Activated CD8-positive, alpha-beta memory T cell treated with anti-CD3 and anti-CD28 coated beads, Interleukin-2, amount 10 ng/mL, durations not matched to agents 7 days and 5 days (primary cell): ENCODE measurements at regions of chr2 and their contacts with region 1.

Region 1: DNA sequence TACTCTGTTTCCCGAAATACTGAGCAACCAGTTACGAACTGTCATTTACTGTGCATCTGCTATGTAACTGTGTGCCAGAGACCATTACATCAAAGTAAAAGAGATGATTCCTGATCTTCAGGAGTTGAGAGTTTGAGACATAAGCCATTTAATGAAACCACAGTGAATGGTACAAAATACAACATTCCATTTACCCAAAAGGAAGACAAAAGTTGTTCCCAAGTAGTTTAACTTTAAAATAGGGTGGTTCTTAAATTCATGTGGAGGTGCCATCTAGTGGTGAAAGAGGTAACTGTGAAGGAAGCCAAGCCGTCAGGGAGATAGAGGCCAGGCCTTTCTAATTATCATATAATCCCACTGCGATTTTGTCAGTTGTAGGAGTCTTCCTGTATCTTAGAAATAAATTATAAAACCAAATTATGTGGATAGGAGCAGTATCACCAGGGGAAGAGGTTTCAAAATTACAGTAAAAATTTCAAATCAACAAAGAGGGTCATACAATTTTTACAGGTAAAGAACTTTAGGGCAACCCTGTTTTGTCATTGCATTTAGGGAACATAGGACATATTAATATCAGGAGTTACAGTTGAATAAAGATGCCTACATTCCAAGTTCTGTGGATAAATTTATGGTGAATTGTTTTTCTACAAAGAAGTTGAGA is 67.7 kb downstream of the EPAS1 start:
- DNase-seq: no peak
- ATAC-seq: no peak
- H3K4me3 Mint-ChIP-seq: no peak overlapping the region
- H3K27ac Mint-ChIP-seq: no peak overlapping the region
- H3K4me1 Mint-ChIP-seq: peaks cover 61% of the 10 kb centered on the region
- H3K27me3 Mint-ChIP-seq: no peaks in the 10 kb centered on the region

Region 2: GRCh38 chr2:46010925-46011490 is 353.9 kb before region 1 on chr2:
- CTCF ChIA-PET with region 1: interaction called, 15 read pairs
- DNase-seq: peak; percentile 39
- ATAC-seq: peak; percentile 85
- H3K4me3 Mint-ChIP-seq: no peak overlapping the region
- H3K27ac Mint-ChIP-seq: peak overlapping the region; percentile 22
- H3K4me1 Mint-ChIP-seq: peaks cover 51% of the 10 kb centered on the region
- H3K27me3 Mint-ChIP-seq: no peaks in the 10 kb centered on the region

Region 3: DNA sequence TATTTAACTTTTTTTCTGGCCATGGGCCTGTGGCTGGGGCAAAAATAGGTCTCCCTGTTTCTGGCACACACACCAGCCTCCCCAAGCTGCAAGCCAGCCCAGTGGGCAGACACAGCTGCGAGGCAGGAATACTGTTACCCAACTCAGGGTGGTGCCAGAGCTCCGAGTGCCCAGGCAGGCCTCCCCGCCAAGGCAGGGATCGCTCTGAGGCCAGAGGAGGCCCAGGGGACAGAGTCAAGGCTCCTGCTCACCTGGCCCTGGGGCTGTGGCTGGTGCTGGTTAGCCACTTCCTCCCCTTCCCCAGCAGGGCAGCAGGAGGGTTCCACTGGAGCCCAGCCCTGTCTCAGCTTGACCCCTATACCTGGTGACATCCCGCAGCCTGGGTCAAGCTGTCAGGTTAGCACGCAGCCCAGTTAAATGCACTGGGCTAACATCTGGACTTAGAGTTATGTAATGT is 134.8 kb before region 1 on chr2:
- CTCF ChIA-PET with region 1: interaction called, 11 read pairs
- DNase-seq: peak; percentile 70
- ATAC-seq: peak; percentile 63
- H3K4me3 Mint-ChIP-seq: peak overlapping the region; percentile 49
- H3K27ac Mint-ChIP-seq: peak overlapping the region; percentile 93
- H3K4me1 Mint-ChIP-seq: peaks cover 43% of the 10 kb centered on the region
- H3K27me3 Mint-ChIP-seq: peaks cover 14% of the 10 kb centered on the region

Region 4: DNA sequence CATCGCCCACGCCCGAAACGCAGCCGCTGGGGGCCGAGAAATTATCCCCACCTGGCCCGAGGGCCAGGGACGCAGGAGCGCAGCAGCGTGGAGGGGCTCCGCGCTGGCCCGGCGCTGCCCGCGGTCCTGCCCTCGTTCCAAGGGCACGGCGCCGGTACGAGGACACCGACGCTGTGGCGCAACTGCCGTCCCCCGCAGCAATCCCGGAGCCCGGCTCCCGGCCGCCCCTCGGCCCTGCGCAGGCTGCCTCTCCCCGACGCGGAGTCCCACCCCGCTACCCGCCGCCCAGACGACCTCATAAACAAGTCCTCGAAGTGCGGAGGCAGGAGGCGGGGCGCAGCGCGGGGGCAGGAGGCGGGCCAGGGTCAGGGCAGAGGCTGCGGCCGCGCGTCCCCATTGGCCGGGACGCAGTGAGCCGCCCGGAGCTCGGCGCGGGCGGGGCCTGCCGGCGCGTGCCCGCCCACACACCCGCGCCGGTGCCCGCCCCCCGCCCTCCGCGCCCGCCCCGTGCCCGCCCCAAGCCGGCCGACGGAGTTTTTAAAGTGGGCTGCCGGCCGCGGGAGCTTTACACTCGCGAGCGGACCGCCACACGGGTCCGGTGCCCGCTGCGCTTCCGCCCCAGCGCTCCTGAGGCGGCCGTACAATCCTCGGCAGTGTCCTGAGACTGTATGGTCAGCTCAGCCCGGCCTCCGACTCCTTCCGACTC is 67.9 kb before region 1 on chr2 and contains the start of gene EPAS1:
- CTCF ChIA-PET with region 1: interaction called, 11 read pairs
- DNase-seq: peak; percentile 91
- ATAC-seq: peak; percentile 93
- H3K4me3 Mint-ChIP-seq: peak within 1 kb of the TSS; percentile 83
- H3K27ac Mint-ChIP-seq: peak within 1 kb of the TSS; percentile 85
- H3K4me1 Mint-ChIP-seq: peaks cover 40% of the 10 kb centered on the region
- H3K27me3 Mint-ChIP-seq: peaks cover 75% of the 10 kb centered on the region
- total RNA-seq, gene EPAS1: 15.6 to 42.5 TPM

Region 5: DNA sequence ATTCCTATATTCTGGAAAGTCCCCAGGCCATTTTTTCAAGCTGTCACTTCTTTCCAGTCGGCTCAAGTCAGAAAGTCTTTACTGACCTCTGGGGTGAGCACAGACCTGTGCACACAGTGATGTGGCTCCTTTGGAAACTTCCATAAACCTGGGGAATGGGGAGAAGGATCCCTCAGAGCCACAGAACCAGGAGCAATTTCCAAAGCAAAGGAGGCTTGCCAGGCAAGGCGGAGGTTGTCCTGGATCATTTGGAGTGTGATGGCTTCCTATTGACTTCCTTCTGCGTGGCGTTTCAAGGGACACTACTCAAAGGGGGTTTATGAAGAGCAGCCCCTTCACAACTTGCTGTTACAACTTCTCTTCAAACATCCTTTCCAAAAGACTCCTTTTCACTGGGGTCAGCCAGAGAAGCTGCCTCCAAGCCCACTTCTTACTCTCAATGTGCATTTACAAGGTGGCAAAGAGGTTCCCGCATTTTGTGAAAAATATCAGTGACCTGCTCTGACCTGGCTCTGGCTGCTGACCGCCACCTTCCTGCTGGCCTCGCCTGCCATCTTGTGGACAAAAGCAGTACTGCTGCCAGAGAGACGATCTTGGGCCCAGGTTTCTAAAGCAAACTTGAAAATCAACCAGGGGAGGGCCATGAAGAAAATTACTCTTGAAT is 96.2 kb after region 1 on chr2:
- CTCF ChIA-PET with region 1: interaction called, 13 read pairs
- DNase-seq: peak; percentile 81
- ATAC-seq: peak; percentile 67
- H3K4me3 Mint-ChIP-seq: no peak overlapping the region
- H3K27ac Mint-ChIP-seq: peak overlapping the region; percentile 28
- H3K4me1 Mint-ChIP-seq: peaks cover 16% of the 10 kb centered on the region
- H3K27me3 Mint-ChIP-seq: no peaks in the 10 kb centered on the region